ENCODE measurements at regions of chr20 and their contacts with region 1.

Region 1: DNA sequence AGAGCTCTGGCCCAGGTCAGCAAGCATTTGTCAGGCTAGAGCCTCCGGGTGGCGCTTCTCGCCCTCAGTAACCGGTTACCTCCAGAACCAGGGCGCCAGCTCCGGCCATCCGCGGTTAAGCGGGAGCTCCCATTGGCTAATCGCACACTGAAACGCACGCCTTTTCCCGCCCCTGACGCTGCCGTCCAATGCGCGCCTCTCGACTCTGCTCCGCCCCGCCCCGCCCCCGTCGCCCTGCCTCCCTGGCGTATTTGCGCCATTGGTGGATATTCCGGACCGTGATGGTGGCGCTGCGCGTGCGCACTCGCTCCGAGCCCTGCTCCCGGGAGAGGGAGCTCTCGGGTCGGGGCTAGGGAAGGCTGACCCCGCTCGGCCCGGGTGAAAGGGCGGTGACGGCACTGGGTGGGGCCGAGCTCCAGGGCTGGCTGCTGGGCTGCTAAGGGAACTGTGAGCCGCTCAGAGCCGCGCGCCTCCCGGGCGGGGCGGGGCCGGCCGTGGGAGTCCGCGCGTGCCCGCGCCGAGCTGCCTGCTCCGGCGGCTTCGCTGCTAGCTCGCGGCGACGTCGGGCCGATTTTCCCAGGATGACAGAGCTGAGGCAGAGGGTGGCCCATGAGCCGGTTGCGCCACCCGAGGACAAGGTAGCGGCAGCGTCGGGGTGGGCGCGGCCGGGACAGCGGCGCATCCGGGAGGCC is at the start of gene CDS2:
- DNase-seq: peak; percentile 99
- H3K4me3 ChIP-seq: peak within 1 kb of the TSS; percentile 69 to 96 (median 87)
- H3K27ac ChIP-seq: peak within 1 kb of the TSS; percentile 91 to 98 (median 96)
- H3K4me1 ChIP-seq: peaks cover 8 to 52% (median 10%) of the 10 kb centered on the region in 3 donors
- H3K27me3 ChIP-seq: no peaks in the 10 kb centered on the region
- CTCF ChIP-seq: peak; percentile 19 to 77 (median 48)
- POLR2A ChIP-seq: peak in 3 of 4 donors; percentile 39 to 93 (median 89)
- total RNA-seq, gene CDS2: 13.7 to 25.7 (median 14.5) TPM

Region 2: DNA sequence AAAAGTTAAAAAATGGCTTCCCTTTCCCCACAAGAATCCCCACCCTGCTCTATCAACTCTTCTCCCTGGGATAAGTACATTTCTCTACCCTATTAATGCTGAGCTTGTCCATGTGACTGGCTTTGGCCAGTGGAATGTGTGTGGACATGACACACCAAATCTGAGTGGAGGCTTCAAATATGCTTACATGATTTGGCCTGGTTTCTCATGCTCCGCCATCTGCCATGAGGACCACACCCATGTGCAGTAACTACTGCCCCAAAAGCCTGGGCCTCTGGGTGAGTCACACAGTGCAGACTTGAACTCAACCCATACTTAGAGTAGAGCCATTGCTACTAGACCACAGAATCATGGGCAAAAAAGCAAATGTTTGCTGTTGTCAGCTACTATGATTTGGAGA is 339.6 kb before region 1 on chr20:
- intact Hi-C with region 1: no loop called
- DNase-seq: no peak
- H3K4me3 ChIP-seq: no peak overlapping the region
- H3K27ac ChIP-seq: no peak overlapping the region
- H3K4me1 ChIP-seq: no peaks in the 10 kb centered on the region
- H3K27me3 ChIP-seq: no peaks in the 10 kb centered on the region
- CTCF ChIP-seq: no peak
- POLR2A ChIP-seq: no peak

Region 3: DNA sequence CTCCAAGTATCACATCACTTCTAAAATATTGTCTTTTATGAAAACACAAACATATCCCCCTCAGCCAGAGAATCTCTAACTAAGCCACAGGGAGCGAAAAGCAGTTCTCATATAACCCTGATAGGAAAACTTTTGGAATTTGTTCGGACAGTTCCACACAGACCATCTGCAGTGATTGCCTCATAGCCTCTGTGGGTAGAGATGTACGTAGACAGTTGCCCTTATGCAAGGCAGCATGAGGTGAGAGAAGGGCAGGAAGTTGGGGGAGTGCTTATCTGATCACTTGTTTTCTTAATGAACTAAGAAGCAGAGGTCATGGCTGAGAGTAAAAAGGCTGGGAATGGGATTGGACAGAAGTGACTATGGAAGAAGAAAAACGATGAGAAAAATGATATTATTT is 164.9 kb before region 1 on chr20:
- intact Hi-C with region 1: no loop called
- DNase-seq: no peak
- H3K4me3 ChIP-seq: no peak overlapping the region
- H3K27ac ChIP-seq: no peak overlapping the region
- H3K4me1 ChIP-seq: peaks cover 0 to 5% (median 0%) of the 10 kb centered on the region in 3 donors
- H3K27me3 ChIP-seq: no peaks in the 10 kb centered on the region
- CTCF ChIP-seq: no peak
- POLR2A ChIP-seq: no peak

Region 4: GRCh38 chr20:5191829-5192569 is 65.3 kb after region 1 on chr20:
- intact Hi-C with region 1: loop called (anchors 5 kb)
- DNase-seq: no peak
- H3K4me3 ChIP-seq: no peak overlapping the region
- H3K27ac ChIP-seq: peak overlapping the region; percentile 56 to 81 (median 68)
- H3K4me1 ChIP-seq: peaks cover 5 to 28% (median 8%) of the 10 kb centered on the region in 3 donors
- H3K27me3 ChIP-seq: no peaks in the 10 kb centered on the region
- CTCF ChIP-seq: peak; percentile 36 to 85 (median 70)
- POLR2A ChIP-seq: no peak